ENCODE measurements at regions of chr4 and their contacts with region 1.

Region 1: GRCh38 chr4:14345356-14345775 is 656.9 kb upstream of the CPEB2 start:
- DNase-seq: no peak
- H3K4me3 ChIP-seq: no peak overlapping the region
- H3K27ac ChIP-seq: no peak overlapping the region
- H3K4me1 ChIP-seq: no peaks in the 10 kb centered on the region
- H3K27me3 ChIP-seq: no peaks in the 10 kb centered on the region
- CTCF ChIP-seq: no peak
- POLR2A ChIP-seq: no peak

Region 2: GRCh38 chr4:12734586-12734985 is 1610.8 kb before region 1 on chr4:
- intact Hi-C with region 1: loop called (anchors 10 kb)
- DNase-seq: no peak
- H3K4me3 ChIP-seq: no peak overlapping the region
- H3K27ac ChIP-seq: no peak overlapping the region
- H3K4me1 ChIP-seq: no peaks in the 10 kb centered on the region
- H3K27me3 ChIP-seq: no peaks in the 10 kb centered on the region
- CTCF ChIP-seq: no peak
- POLR2A ChIP-seq: no peak

Region 3: GRCh38 chr4:14520171-14520570 is 174.8 kb after region 1 on chr4:
- intact Hi-C with region 1: no loop called
- DNase-seq: no peak
- H3K4me3 ChIP-seq: no peak overlapping the region
- H3K27ac ChIP-seq: no peak overlapping the region
- H3K4me1 ChIP-seq: no peaks in the 10 kb centered on the region
- H3K27me3 ChIP-seq: no peaks in the 10 kb centered on the region
- CTCF ChIP-seq: no peak
- POLR2A ChIP-seq: no peak